ENCODE measurements at regions of chr17 and their contacts with region 1.

Region 1: GRCh38 chr17:80761110-80761871 is 216.7 kb downstream of the RPTOR start:
- DNase-seq: peak in 5 of 9 donors; percentile 34 to 73 (median 41)
- ATAC-seq: peak; percentile 45
- H3K4me3 ChIP-seq: peak overlapping the region; percentile 28
- H3K4me3 Mint-ChIP-seq: peak overlapping the region; percentile 60 to 84 (median 80)
- H3K27ac ChIP-seq: peak overlapping the region; percentile 81
- H3K27ac Mint-ChIP-seq: peak overlapping the region; percentile 87 to 98 (median 94)
- H3K4me1 ChIP-seq: peaks cover 34 to 68% of the 10 kb centered on the region in 2 donors
- H3K4me1 Mint-ChIP-seq: peaks cover 59 to 94% (median 84%) of the 10 kb centered on the region in 7 donors
- H3K27me3 ChIP-seq: no peaks in the 10 kb centered on the region
- H3K27me3 Mint-ChIP-seq: no peaks in the 10 kb centered on the region

Region 2: GRCh38 chr17:80743181-80743771 is 18.0 kb before region 1 on chr17:
- CTCF ChIA-PET with region 1: no interaction called
- POLR2A ChIA-PET with region 1: interaction called, 4 read pairs
- intact Hi-C with region 1: loop called (anchors 2 kb)
- DNase-seq: peak in 8 of 9 donors; percentile 40 to 82 (median 72)
- ATAC-seq: peak; percentile 75
- H3K4me3 ChIP-seq: peak overlapping the region; percentile 33
- H3K4me3 Mint-ChIP-seq: peak overlapping the region; percentile 80 to 93 (median 85)
- H3K27ac ChIP-seq: peak overlapping the region; percentile 74
- H3K27ac Mint-ChIP-seq: peak overlapping the region; percentile 83 to 95 (median 91)
- H3K4me1 ChIP-seq: peaks cover 0 to 61% of the 10 kb centered on the region in 2 donors
- H3K4me1 Mint-ChIP-seq: peaks cover 39 to 80% (median 69%) of the 10 kb centered on the region in 7 donors
- H3K27me3 ChIP-seq: no peaks in the 10 kb centered on the region
- H3K27me3 Mint-ChIP-seq: no peaks in the 10 kb centered on the region

Region 3: GRCh38 chr17:80773243-80773991 is 12.1 kb after region 1 on chr17:
- CTCF ChIA-PET with region 1: interaction called, 6 read pairs
- POLR2A ChIA-PET with region 1: interaction called, 17 read pairs
- intact Hi-C with region 1: loop called in 1 of 2 experiments (anchors 1 kb)
- DNase-seq: peak in 4 of 9 donors; percentile 37 to 62 (median 50)
- ATAC-seq: peak; percentile 57
- H3K4me3 ChIP-seq: no peak overlapping the region
- H3K4me3 Mint-ChIP-seq: peak overlapping the region; percentile 2 to 88 (median 70)
- H3K27ac ChIP-seq: peak overlapping the region; percentile 72
- H3K27ac Mint-ChIP-seq: peak overlapping the region; percentile 88 to 99 (median 94)
- H3K4me1 ChIP-seq: peaks cover 0 to 46% of the 10 kb centered on the region in 2 donors
- H3K4me1 Mint-ChIP-seq: peaks cover 45 to 94% (median 83%) of the 10 kb centered on the region in 7 donors
- H3K27me3 ChIP-seq: no peaks in the 10 kb centered on the region
- H3K27me3 Mint-ChIP-seq: no peaks in the 10 kb centered on the region

Region 4: GRCh38 chr17:80780381-80781198 is 19.3 kb after region 1 on chr17:
- CTCF ChIA-PET with region 1: interaction called, 4 read pairs
- POLR2A ChIA-PET with region 1: interaction called, 39 read pairs
- intact Hi-C with region 1: loop called (anchors 1 to 2 kb)
- DNase-seq: peak in 3 of 9 donors; percentile 29 to 57 (median 43)
- ATAC-seq: peak; percentile 40
- H3K4me3 ChIP-seq: peak overlapping the region; percentile 45
- H3K4me3 Mint-ChIP-seq: peak overlapping the region; percentile 62 to 96 (median 82)
- H3K27ac ChIP-seq: peak overlapping the region; percentile 70
- H3K27ac Mint-ChIP-seq: peak overlapping the region; percentile 87 to 99 (median 94)
- H3K4me1 ChIP-seq: peaks cover 38 to 57% of the 10 kb centered on the region in 2 donors
- H3K4me1 Mint-ChIP-seq: peaks cover 30 to 90% (median 77%) of the 10 kb centered on the region in 7 donors
- H3K27me3 ChIP-seq: no peaks in the 10 kb centered on the region
- H3K27me3 Mint-ChIP-seq: no peaks in the 10 kb centered on the region

Region 5: GRCh38 chr17:80855948-80856862 is 94.9 kb after region 1 on chr17:
- CTCF ChIA-PET with region 1: no interaction called
- POLR2A ChIA-PET with region 1: interaction called, 3 read pairs
- intact Hi-C with region 1: loop called in 1 of 2 experiments (anchors 1 kb)
- DNase-seq: peak in 2 of 9 donors; percentile 26 to 80
- ATAC-seq: peak; percentile 92
- H3K4me3 ChIP-seq: no peak overlapping the region
- H3K4me3 Mint-ChIP-seq: peak overlapping the region in 6 of 10 donors; percentile 18 to 71 (median 30)
- H3K27ac ChIP-seq: peak overlapping the region; percentile 19
- H3K27ac Mint-ChIP-seq: peak overlapping the region in 8 of 9 donors; percentile 23 to 95 (median 70)
- H3K4me1 ChIP-seq: peaks cover 10 to 27% of the 10 kb centered on the region in 2 donors
- H3K4me1 Mint-ChIP-seq: peaks cover 23 to 78% (median 55%) of the 10 kb centered on the region in 7 donors
- H3K27me3 ChIP-seq: no peaks in the 10 kb centered on the region
- H3K27me3 Mint-ChIP-seq: no peaks in the 10 kb centered on the region